ENCODE measurements at regions of chr1 and their contacts with region 1.

Region 1: DNA sequence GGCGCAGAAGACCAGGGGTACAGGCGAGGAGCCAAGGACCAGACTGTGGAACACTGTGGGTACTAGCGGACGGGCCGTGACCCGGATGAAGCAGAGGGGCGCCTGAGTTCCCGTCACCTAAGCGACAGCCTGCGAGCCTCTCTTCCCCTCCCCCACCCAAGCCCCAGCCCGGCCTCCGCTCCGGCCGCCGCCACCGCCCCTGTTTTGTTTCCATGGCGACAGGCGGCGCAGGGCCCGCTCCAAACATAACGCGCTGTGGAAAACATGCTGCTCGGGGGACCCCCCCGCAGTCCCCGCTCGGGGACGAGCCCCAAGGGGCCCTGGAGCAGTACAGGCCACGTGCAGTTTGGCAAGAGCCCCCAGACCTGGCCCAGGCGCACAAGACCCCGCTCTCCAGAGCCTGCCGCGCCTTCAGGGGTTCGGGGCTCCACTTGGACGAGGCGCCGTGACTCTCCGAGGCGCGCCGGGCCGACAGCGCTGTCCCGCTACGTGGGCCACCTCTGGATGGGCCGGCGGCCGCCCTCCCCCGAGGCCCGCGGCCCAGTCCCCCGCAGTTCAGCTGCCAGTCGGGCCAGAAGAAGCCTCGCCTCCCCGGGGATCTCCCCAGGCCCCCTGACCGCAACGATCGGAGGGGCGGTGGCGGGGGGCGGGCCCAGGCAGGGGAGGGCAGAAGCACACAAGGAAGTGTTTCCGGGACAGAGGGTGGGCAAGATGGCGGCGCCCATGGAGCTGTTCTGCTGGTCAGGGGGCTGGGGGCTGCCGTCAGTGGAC is at the start of gene MTX1:
- DNase-seq: peak; percentile 87
- H3K4me3 ChIP-seq: peak within 1 kb of the TSS; percentile 90
- H3K27ac ChIP-seq: peak within 1 kb of the TSS; percentile 77
- H3K4me1 ChIP-seq: peaks cover 28% of the 10 kb centered on the region
- CTCF ChIP-seq: no peak
- total RNA-seq, gene MTX1: 67.6 and 70.2 TPM in 2 replicates

Region 2: DNA sequence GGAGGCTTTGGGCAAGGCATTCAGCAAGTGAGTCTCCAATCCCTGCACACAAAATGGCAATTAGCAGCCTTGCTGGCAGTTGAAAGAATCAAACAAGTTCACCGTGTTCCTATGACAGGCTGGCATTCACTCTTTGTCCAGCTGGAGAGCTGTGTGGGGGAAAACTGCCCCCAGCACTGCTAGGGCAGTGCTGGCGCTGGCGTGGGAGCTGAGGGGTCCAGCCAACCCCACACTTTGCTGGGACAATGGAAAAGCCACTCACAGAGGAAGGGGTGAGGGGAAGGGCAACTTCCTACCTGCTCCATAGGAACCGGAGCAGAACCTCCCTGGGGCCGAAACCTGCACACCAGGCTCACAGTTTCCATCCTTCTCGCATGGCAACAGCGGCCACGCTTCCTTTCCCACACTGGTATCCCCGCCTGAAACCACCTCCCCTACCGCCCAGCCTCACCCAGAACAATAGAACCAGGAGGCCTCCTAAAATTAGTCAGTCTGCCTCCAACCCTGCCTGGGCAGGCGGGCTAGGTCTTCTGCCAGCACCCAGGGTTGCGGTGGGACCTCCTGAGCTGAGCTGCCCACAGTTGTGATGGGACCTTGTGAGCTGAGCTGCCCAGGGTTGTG is 311.8 kb before region 1 on chr1:
- CTCF ChIA-PET with region 1: no interaction called
- POLR2A ChIA-PET with region 1: no interaction called
- intact Hi-C with region 1: no loop called
- DNase-seq: no peak
- H3K4me3 ChIP-seq: no peak overlapping the region
- H3K27ac ChIP-seq: no peak overlapping the region
- H3K4me1 ChIP-seq: no peaks in the 10 kb centered on the region
- CTCF ChIP-seq: no peak

Region 3: GRCh38 chr1:155227261-155228095 is 18.8 kb after region 1 on chr1:
- CTCF ChIA-PET with region 1: interaction called, 9 read pairs
- POLR2A ChIA-PET with region 1: interaction called, 9 read pairs
- intact Hi-C with region 1: loop called (anchors 1 kb)
- DNase-seq: peak; percentile 100
- H3K4me3 ChIP-seq: peak overlapping the region; percentile 83
- H3K27ac ChIP-seq: peak overlapping the region; percentile 89
- H3K4me1 ChIP-seq: peaks cover 50% of the 10 kb centered on the region
- CTCF ChIP-seq: no peak

Region 4: GRCh38 chr1:155244368-155245162 is 35.8 kb after region 1 on chr1:
- CTCF ChIA-PET with region 1: no interaction called
- POLR2A ChIA-PET with region 1: no interaction called
- intact Hi-C with region 1: loop called (anchors 1 kb)
- DNase-seq: peak; percentile 100
- H3K4me3 ChIP-seq: peak overlapping the region; percentile 81
- H3K27ac ChIP-seq: peak overlapping the region; percentile 82
- H3K4me1 ChIP-seq: peaks cover 38% of the 10 kb centered on the region
- CTCF ChIP-seq: peak; percentile 63

Region 5: GRCh38 chr1:155261852-155262673 is 53.3 kb after region 1 on chr1 and contains the start of gene SCAMP3:
- CTCF ChIA-PET with region 1: no interaction called
- POLR2A ChIA-PET with region 1: interaction called, 3 read pairs
- intact Hi-C with region 1: loop called (anchors 5 kb)
- DNase-seq: peak; percentile 96
- H3K4me3 ChIP-seq: peak within 1 kb of the TSS; percentile 84
- H3K27ac ChIP-seq: peak within 1 kb of the TSS; percentile 51
- H3K4me1 ChIP-seq: peaks cover 17% of the 10 kb centered on the region
- CTCF ChIP-seq: no peak
- total RNA-seq, gene SCAMP3: 45.4 and 58.3 TPM in 2 replicates

Measured in OCI-LY7 (cell line).